ENCODE measurements at regions of chr5 and their contacts with region 1.

Region 1: DNA sequence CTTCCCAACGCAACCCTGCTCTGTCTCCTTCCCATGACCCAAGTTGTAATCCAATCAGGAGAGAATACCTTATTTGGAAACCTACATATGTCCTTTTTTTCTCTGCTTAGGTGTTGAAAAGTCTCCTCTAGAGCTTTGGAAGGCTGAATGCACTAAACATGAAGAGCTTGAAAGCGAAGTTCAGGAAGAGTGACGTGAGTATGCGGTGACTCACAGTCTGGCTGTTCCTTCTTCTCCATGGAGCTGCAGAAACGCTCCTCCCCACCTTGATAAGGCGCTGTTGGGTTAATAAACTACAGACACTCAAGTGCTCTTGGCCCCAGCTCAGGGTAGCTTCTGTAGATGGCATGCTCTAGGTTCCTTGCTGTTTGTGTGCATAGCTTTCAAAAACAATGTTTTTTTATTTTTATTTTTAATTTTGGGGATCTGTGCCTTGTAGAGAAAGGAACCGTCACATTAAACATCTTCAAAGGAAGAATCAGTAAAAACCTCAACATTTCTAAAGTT is 30.7 kb downstream of the RAI14 start:
- DNase-seq: no peak
- ATAC-seq: peak; percentile 16; the same call in 1 of the 2 replicates
- H3K4me3 Mint-ChIP-seq: no peak overlapping the region
- H3K27ac Mint-ChIP-seq: peak overlapping the region; percentile 81
- H3K4me1 Mint-ChIP-seq: peaks cover 78% of the 10 kb centered on the region
- H3K27me3 Mint-ChIP-seq: no peaks in the 10 kb centered on the region
- CTCF ChIP-seq: no peak

Region 2: DNA sequence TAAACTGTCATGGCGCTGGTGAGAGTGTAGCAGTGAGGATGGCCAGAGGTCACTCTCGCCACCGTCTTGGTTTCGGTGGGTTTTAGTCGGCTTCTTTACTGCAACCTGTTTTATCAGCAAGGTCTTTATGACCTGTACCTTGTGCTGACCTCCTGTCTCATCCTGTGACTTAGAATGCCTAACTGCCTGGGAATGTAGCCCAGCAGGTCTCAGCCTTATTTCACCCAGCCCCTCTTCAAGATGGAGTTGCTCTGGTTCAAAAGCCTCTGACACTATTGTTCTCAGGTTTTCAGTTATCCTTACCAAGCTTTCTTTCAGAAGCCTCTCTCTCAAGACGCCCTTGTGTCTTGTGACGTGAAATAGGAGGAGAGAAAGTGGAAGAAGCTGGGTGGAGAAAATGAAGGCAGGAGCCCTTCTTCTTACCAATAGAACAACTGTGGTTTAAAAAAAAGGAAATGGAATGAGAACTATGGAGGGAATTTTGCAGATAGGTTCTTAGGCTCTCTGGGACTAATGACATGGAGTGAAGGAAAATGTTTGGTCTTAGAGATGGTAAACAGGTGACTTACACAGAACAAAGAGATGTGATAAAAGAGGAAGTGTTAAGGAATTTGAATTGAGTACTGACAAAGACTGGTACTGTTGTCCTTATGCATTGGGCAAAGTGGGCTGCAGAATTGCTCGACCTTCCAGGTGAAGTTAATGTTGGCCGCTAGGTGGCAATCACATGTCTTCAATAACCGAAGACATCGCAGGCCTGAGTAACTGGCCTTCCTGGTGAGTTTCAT is 164.0 kb before region 1 on chr5:
- CTCF ChIA-PET with region 1: interaction called, 13 read pairs
- POLR2A ChIA-PET with region 1: no interaction called
- DNase-seq: peak; percentile 80
- ATAC-seq: peak; percentile 92
- H3K4me3 Mint-ChIP-seq: no peak overlapping the region
- H3K27ac Mint-ChIP-seq: peak overlapping the region; percentile 90
- H3K4me1 Mint-ChIP-seq: peaks cover 28% of the 10 kb centered on the region
- H3K27me3 Mint-ChIP-seq: no peaks in the 10 kb centered on the region
- CTCF ChIP-seq: peak; percentile 73

Region 3: GRCh38 chr5:34703767-34704713 is 17.2 kb after region 1 on chr5:
- CTCF ChIA-PET with region 1: interaction called, 5 read pairs
- POLR2A ChIA-PET with region 1: interaction called, 11 read pairs
- DNase-seq: peak; percentile 30
- ATAC-seq: peak; percentile 81
- H3K4me3 Mint-ChIP-seq: peak overlapping the region; percentile 48
- H3K27ac Mint-ChIP-seq: peak overlapping the region; percentile 97
- H3K4me1 Mint-ChIP-seq: peaks cover 81% of the 10 kb centered on the region
- H3K27me3 Mint-ChIP-seq: no peaks in the 10 kb centered on the region
- CTCF ChIP-seq: no peak

Region 4: GRCh38 chr5:34977934-34978613 is 291.3 kb after region 1 on chr5:
- CTCF ChIA-PET with region 1: no interaction called
- POLR2A ChIA-PET with region 1: no interaction called
- DNase-seq: no peak
- ATAC-seq: no peak
- H3K4me3 Mint-ChIP-seq: no peak overlapping the region
- H3K27ac Mint-ChIP-seq: no peak overlapping the region; the same call in 1 of the 2 replicates
- H3K4me1 Mint-ChIP-seq: peaks cover 8% of the 10 kb centered on the region
- H3K27me3 Mint-ChIP-seq: no peaks in the 10 kb centered on the region
- CTCF ChIP-seq: no peak

Measured in WTC11 (cell line).